Right ventricle myocardium inferior (tissue), 1 donor: ENCODE measurements at regions of chr1 and their contacts with region 1.

Region 1: DNA sequence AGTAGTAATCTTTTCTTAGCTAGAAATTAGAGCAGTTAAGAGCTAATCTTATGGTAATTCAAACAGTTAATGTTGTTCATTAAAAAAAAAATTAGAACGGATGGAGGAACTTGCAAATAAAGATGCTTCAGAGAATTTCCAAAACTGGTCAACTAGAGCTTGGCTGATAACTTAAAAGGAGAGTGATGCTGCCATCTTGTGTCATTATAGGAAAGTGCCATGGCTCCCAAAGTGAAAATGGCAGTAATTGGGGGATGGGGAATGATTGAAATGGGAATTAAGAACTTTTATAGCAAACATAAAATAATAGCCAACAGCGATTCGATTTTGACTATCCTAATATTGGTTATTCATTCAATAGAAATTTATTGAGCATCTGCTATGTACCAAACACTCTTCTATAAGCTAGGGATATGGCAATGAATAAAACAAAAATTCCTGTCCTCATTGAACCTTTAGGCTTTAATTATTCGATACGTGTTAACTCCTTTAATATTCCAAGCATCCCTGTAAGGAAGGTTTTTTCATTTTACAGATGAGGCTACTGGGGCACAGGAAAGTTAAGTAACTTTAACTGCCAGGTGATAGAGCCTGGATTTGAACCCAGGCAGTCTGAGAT is 5.7 kb upstream of the PLPP3 start:
- DNase-seq: no peak
- ATAC-seq: peak; percentile 72

Region 2: GRCh38 chr1:55140546-55140983 is 1444.5 kb before region 1 on chr1:
- intact Hi-C with region 1: loop called (anchors 10 kb)
- DNase-seq: peak; percentile 69
- ATAC-seq: peak; percentile 93

Region 3: DNA sequence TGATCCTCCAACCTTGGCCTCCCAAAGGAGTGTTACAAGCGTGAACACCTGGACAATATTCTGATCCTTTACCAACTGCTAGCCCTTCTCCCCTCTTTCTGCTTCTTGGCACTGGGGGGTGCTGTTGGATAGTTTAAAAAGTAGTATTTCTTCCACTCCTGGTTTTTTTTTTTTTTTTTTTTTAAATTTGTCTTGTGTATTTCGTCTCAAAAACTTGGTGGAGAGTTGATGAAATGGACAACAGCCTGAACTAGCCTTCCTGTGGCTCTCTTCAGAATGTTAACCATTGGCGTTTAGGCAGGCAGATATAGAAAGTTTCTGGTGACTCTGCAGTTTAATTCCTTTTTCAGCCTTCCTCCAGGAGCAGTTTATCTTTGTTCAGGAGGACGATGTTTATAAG is 1300.2 kb before region 1 on chr1:
- intact Hi-C with region 1: loop called (anchors 2 kb)
- DNase-seq: no peak
- ATAC-seq: peak; percentile 62

Region 4: GRCh38 chr1:55375617-55376258 is 1209.3 kb before region 1 on chr1:
- intact Hi-C with region 1: loop called (anchors 5 kb)
- DNase-seq: no peak
- ATAC-seq: no peak

Region 5: GRCh38 chr1:55478742-55479141 is 1106.3 kb before region 1 on chr1:
- intact Hi-C with region 1: loop called (anchors 5 kb)
- DNase-seq: no peak
- ATAC-seq: no peak

Region 6: DNA sequence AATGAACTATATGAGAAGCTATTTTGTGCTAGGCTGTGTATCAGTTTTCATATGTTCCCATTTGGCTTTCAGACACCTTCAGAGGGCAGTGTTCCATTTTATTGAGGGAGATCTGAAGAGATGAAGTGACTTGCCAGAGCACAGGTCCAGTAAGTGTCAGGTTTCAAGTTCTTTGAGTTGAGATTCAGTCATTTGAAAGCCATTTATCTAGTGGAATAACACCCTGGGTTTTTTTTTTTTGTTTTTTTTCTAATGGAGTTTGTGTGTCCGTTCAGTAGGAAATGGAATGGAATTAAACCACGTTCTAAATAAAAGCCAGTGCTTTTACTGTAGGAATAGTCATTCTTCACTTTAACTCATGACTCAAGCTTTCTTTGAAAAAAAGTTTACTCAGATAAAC is 717.0 kb before region 1 on chr1:
- intact Hi-C with region 1: loop called (anchors 10 kb)
- DNase-seq: no peak
- ATAC-seq: peak; percentile 43

Region 7: GRCh38 chr1:56639210-56639609 is 54.2 kb after region 1 on chr1:
- intact Hi-C with region 1: no loop called
- DNase-seq: no peak
- ATAC-seq: no peak